IMR-90 (cell line): ENCODE measurements at regions of chr15 and their contacts with region 1.

Region 1: DNA sequence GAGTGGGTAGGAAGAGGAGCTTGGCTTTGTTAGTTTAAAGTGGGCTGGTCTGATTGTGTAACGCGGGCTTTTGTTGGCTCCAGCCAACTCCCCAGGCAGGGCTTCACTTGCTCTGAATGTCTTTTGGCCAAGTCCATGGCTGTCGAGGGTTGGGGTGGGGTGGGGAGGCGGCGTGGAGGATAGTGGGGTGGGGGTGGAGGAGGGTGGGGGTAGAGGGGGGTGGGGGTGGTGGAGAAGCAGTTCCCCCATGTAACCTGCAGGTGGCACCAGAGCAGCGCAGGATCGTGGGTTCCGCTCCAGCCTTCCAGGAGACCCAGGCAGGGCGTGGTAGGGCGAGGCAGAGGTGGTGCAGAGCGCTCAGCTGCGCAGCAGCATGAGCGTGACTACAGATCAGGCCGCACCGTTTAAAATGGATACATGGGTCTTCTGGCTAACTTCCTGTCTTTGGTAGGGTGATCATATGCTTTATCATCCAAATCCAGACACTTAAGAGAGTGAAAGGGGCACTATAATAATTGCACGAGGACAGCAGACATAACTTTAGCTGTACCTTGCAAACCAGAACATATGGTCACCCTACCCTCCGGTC is 28.3 kb downstream of the GOLGA6A start:
- DNase-seq: peak; percentile 44
- ATAC-seq: peak; percentile 73
- H3K4me3 ChIP-seq: no peak overlapping the region
- H3K27ac ChIP-seq: no peak overlapping the region
- H3K4me1 ChIP-seq: peaks cover 25% of the 10 kb centered on the region
- H3K27me3 ChIP-seq: peaks cover 7% of the 10 kb centered on the region
- CTCF ChIP-seq: peak; percentile 63
- POLR2A ChIP-seq: no peak
- RAD21 ChIP-seq: peak; percentile 78

Region 2: GRCh38 chr15:74322181-74323076 is 268.4 kb after region 1 on chr15:
- CTCF ChIA-PET with region 1: interaction called, 18 read pairs
- POLR2A ChIA-PET with region 1: no interaction called
- dilution Hi-C with region 1: no loop called
- in situ Hi-C with region 1: loop called (anchors 5 kb)
- intact Hi-C with region 1: loop called (anchors 1 kb)
- DNase-seq: peak; percentile 58
- ATAC-seq: peak; percentile 87
- H3K4me3 ChIP-seq: no peak overlapping the region
- H3K27ac ChIP-seq: no peak overlapping the region
- H3K4me1 ChIP-seq: peaks cover 10% of the 10 kb centered on the region; the same call in 1 of the 2 replicates
- H3K27me3 ChIP-seq: peaks cover 22% of the 10 kb centered on the region
- CTCF ChIP-seq: peak; percentile 96
- POLR2A ChIP-seq: peak; percentile 36; the same call in 1 of the 2 replicates
- RAD21 ChIP-seq: peak; percentile 98